Left colon (tissue), 2 donors: ENCODE measurements at regions of chr7 and their contacts with region 1.

Region 1: DNA sequence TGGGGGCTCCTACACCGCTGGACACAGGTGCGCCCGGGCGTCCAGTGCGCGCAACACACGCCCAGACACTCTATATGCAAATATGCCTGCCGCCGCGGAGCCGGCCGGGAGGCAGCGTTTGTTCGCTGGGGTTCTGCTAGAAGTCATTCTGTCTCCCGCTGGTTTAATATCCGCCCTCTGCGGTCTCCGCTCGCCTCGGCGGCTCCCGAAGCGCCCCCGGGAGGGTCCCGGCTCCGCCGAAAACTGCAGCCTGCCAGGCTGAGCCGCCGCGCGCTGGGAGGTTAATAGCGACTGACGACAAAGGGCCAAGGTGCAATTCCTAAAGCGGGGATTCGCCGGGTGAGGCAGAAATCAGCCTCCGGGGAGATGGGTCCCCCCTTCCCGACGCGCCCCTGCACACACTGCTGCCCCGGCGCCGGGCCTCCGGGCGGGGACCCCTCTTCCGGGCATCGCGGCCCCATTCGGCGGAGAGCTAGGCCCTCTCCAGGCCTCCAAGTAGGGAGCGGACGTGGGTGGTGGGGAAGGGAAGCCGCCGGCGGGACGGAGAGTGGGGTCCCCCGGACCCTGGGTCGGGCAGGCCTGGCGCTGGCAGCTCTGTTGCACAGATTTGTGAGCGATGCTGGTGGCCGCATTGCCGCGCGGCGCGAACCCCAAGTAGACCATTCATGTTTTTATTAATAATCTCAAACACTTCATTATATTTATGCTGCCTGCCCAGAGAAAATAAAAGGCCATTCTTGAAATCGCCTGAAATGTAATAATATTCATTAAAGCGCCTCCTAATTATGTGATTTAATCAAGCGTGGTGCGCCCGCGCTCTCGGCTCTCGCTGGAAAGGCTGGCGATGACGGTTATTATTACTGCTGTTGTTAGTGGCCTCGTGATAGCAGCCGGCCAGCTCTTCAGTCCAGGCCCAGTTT is 9.1 kb downstream of the EN2 start:
- DNase-seq: no peak
- ATAC-seq: peak; percentile 45

Region 2: DNA sequence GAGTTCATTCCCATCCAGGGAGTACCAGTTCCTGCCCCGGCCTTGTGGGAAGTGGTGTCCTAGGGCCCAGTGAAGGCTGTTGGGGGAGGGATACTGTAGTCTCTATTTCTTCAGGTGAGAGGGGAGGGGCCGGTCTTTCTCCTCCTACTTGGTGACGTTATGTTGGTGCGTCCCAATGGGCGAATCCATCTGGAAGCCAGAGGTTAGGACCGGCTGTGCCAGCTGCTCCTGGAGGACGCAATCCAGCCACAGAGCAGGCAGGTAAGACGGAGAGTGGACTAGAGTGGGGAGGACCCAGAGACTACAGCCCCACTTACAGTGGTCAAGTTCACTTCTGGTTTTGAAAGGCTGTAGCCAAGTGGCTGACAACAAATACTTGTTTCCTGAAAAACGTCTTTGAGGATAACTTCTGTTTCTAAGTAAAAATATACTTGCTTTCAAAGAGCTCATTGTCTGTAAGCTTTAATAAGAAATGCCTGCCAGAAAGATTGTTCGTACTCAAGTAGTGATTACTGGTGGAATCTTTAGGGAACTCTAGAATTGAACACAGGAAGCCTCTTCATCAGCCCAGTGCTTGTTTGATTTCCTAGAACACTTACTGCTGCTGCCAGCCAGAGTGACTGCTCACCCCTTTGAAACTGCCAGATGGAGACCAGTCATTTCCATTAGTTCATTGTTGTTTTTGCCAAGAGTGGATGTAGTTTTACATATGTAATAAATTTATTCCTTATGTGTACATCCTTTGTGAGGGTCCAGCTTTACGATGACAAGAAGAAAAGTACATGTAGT is 202.8 kb after region 1 on chr7:
- intact Hi-C with region 1: loop called in 1 of 2 experiments (anchors 10 kb)
- DNase-seq: no peak
- ATAC-seq: no peak

Region 3: GRCh38 chr7:155785536-155785935 is 318.5 kb after region 1 on chr7:
- intact Hi-C with region 1: no loop called
- DNase-seq: no peak
- ATAC-seq: no peak